ENCODE measurements at regions of chr1 and their contacts with region 1.

Region 1: DNA sequence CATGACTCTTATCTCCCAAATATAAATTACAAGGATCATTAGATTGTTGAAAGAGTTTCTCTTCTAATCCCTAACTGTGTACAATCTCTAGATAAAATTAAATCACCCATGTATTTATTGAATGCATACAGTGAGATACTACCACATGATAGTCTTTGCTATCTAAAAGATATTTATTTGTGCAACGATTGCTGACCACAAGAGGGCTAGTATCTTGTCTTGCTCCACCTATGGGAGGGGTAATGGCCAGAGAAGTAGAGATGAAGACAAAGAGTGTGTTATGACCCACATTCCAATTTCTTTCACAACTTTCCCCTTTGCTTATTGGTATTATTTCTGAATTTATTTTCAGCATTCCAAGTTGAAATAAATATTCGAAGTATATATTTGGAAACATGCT is 13.7 kb downstream of the PYHIN1 start:
- DNase-seq: no peak
- ATAC-seq: no peak
- H3K4me3 ChIP-seq: no peak overlapping the region
- H3K4me3 Mint-ChIP-seq: no peak overlapping the region
- H3K27ac ChIP-seq: no peak overlapping the region
- H3K27ac Mint-ChIP-seq: no peak overlapping the region
- H3K4me1 ChIP-seq: no peaks in the 10 kb centered on the region
- H3K4me1 Mint-ChIP-seq: peaks cover 3% of the 10 kb centered on the region
- H3K27me3 ChIP-seq: no peaks in the 10 kb centered on the region
- H3K27me3 Mint-ChIP-seq: peaks cover 7% of the 10 kb centered on the region
- CTCF ChIP-seq: no peak

Region 2: GRCh38 chr1:157849229-157849875 is 1095.7 kb before region 1 on chr1:
- CTCF ChIA-PET with region 1: no interaction called
- POLR2A ChIA-PET with region 1: no interaction called
- intact Hi-C with region 1: no loop called
- DNase-seq: peak in 1 of 14 experiments; percentile 5
- ATAC-seq: no peak
- H3K4me3 ChIP-seq: no peak overlapping the region
- H3K4me3 Mint-ChIP-seq: no peak overlapping the region
- H3K27ac ChIP-seq: no peak overlapping the region
- H3K27ac Mint-ChIP-seq: no peak overlapping the region
- H3K4me1 ChIP-seq: no peaks in the 10 kb centered on the region
- H3K4me1 Mint-ChIP-seq: no peaks in the 10 kb centered on the region
- H3K27me3 ChIP-seq: no peaks in the 10 kb centered on the region
- H3K27me3 Mint-ChIP-seq: peaks cover 8% of the 10 kb centered on the region
- CTCF ChIP-seq: no peak

Region 3: DNA sequence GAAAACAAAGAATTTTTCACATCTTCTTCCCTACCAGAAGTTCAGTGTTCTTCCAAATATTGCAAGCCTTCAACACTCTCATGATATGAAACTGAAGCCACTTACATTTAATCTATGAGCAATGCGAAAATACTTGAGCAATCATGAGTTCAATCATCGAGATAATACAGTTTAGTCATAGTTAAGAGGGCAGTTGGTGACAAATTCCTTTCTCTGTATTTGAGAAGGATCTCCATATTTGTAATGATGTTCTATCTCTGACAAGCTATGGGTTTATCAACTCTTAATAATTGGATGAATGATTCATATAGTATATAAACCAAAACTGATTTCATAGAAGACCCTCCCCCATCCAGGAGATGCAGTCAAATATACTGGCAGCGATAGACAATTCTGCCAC is 43.4 kb before region 1 on chr1:
- CTCF ChIA-PET with region 1: interaction called, 3 read pairs
- POLR2A ChIA-PET with region 1: no interaction called
- intact Hi-C with region 1: loop called in 1 of 2 experiments (anchors 5 kb)
- DNase-seq: no peak
- ATAC-seq: no peak
- H3K4me3 ChIP-seq: no peak overlapping the region
- H3K4me3 Mint-ChIP-seq: no peak overlapping the region
- H3K27ac ChIP-seq: no peak overlapping the region
- H3K27ac Mint-ChIP-seq: no peak overlapping the region
- H3K4me1 ChIP-seq: no peaks in the 10 kb centered on the region
- H3K4me1 Mint-ChIP-seq: no peaks in the 10 kb centered on the region
- H3K27me3 ChIP-seq: peaks cover 0 to 5% of the 10 kb centered on the region in 2 experiments
- H3K27me3 Mint-ChIP-seq: peaks cover 35% of the 10 kb centered on the region
- CTCF ChIP-seq: no peak

Region 4: GRCh38 chr1:158916085-158916484 is 29.0 kb before region 1 on chr1:
- CTCF ChIA-PET with region 1: no interaction called
- POLR2A ChIA-PET with region 1: no interaction called
- intact Hi-C with region 1: no loop called
- DNase-seq: no peak
- ATAC-seq: no peak
- H3K4me3 ChIP-seq: no peak overlapping the region
- H3K4me3 Mint-ChIP-seq: no peak overlapping the region
- H3K27ac ChIP-seq: no peak overlapping the region
- H3K27ac Mint-ChIP-seq: no peak overlapping the region
- H3K4me1 ChIP-seq: no peaks in the 10 kb centered on the region
- H3K4me1 Mint-ChIP-seq: no peaks in the 10 kb centered on the region
- H3K27me3 ChIP-seq: no peaks in the 10 kb centered on the region
- H3K27me3 Mint-ChIP-seq: no peaks in the 10 kb centered on the region
- CTCF ChIP-seq: no peak